ENCODE measurements at regions of chr4 and their contacts with region 1.

Region 1: GRCh38 chr4:110049951-110050925 is 137.6 kb downstream of the EGF start:
- DNase-seq: peak; percentile 38
- H3K4me3 ChIP-seq: no peak overlapping the region
- H3K27ac ChIP-seq: no peak overlapping the region
- H3K4me1 ChIP-seq: peaks cover 0 to 8% of the 10 kb centered on the region in 2 experiments; a peak in 1 of 4 replicates
- H3K27me3 ChIP-seq: no peaks in the 10 kb centered on the region
- CTCF ChIP-seq: peak; percentile 90
- EP300 ChIP-seq: no peak
- RAD21 ChIP-seq: peak; percentile 84

Region 2: GRCh38 chr4:110005461-110006056 is 44.7 kb before region 1 on chr4:
- CTCF ChIA-PET with region 1: interaction called, 13 read pairs
- POLR2A ChIA-PET with region 1: no interaction called
- DNase-seq: peak; percentile 52
- H3K4me3 ChIP-seq: no peak overlapping the region
- H3K27ac ChIP-seq: no peak overlapping the region
- H3K4me1 ChIP-seq: no peaks in the 10 kb centered on the region
- H3K27me3 ChIP-seq: no peaks in the 10 kb centered on the region
- CTCF ChIP-seq: peak; percentile 90
- EP300 ChIP-seq: no peak
- RAD21 ChIP-seq: peak; percentile 96

Region 3: DNA sequence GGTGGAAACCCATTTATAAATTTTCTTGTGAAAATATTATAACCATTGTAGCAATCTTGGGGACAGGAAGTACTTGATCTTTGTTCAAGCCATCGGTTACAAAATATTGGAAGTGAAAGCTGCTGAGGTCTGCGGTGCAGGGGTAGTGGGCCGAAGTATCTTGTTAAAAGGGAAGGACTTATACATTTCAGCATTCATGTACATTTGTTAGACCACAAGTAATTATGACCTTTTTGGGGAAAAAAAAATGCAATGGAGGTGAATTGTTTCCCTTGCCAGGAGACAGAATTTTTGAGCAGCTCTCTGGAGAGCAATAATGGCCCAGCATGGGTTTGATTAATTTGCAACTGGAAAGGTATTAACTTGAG is 16.2 kb before region 1 on chr4:
- CTCF ChIA-PET with region 1: interaction called, 11 read pairs
- POLR2A ChIA-PET with region 1: no interaction called
- DNase-seq: no peak
- H3K4me3 ChIP-seq: no peak overlapping the region
- H3K27ac ChIP-seq: no peak overlapping the region
- H3K4me1 ChIP-seq: no peaks in the 10 kb centered on the region; a peak in 1 of 4 replicates
- H3K27me3 ChIP-seq: no peaks in the 10 kb centered on the region
- CTCF ChIP-seq: no peak
- EP300 ChIP-seq: no peak
- RAD21 ChIP-seq: no peak

Region 4: DNA sequence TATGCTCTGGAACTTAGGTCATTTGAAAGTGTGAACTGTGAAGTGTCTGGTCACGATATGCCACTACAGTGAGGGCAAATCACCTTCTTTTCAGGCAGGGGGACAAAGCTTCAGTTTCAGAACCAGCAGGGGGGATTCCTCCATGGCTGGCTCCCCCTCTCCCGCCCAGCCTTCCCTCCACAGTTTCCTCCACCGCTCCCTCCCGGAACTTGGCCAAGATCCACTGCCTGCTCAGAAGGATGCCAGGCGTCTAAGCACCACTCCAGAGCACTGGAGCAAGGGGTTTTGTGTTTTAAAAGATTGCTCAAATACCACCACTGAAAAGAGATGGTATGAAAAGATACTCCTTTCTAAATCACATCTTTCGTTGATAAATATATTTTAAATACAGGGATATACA is 21.2 kb after region 1 on chr4:
- CTCF ChIA-PET with region 1: interaction called, 17 read pairs
- POLR2A ChIA-PET with region 1: interaction called, 3 read pairs
- DNase-seq: no peak
- H3K4me3 ChIP-seq: no peak overlapping the region
- H3K27ac ChIP-seq: no peak overlapping the region
- H3K4me1 ChIP-seq: peaks cover 0 to 14% of the 10 kb centered on the region in 2 experiments; a peak in 2 of 4 replicates
- H3K27me3 ChIP-seq: no peaks in the 10 kb centered on the region
- CTCF ChIP-seq: no peak
- EP300 ChIP-seq: no peak
- RAD21 ChIP-seq: no peak

Region 5: GRCh38 chr4:110268352-110268751 is 218.1 kb after region 1 on chr4:
- CTCF ChIA-PET with region 1: no interaction called
- POLR2A ChIA-PET with region 1: no interaction called
- DNase-seq: no peak
- H3K4me3 ChIP-seq: no peak overlapping the region
- H3K27ac ChIP-seq: no peak overlapping the region
- H3K4me1 ChIP-seq: no peaks in the 10 kb centered on the region
- H3K27me3 ChIP-seq: no peaks in the 10 kb centered on the region
- CTCF ChIP-seq: no peak
- EP300 ChIP-seq: no peak
- RAD21 ChIP-seq: no peak

Region 6: DNA sequence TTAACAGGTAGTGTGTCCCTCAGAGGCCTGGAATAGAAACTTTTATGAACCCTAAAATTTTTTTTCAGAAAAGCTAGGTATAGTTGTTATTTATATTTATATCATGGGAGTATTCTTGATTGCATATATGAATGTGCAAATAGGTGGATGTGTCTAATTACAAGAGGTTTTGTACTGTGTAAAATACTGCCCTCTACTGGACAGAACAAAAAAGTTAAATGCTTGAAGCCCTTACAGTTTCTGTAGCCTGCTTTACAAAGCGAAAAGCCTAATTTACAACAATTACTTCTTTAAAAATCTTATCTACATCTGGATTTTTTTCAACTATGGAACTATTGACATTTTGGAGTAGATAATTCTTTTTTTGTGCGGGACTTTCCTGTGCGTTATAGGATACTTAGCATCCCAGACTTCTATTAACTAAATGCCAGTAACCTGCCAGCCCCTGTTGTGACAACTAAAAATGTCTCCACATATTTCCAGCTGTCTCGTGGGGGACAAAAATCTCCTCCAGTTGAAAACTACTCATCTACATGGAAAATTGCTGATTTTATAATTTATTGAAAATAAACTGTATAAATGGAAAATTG is 460.8 kb after region 1 on chr4:
- CTCF ChIA-PET with region 1: interaction called, 28 read pairs
- POLR2A ChIA-PET with region 1: no interaction called
- DNase-seq: peak; percentile 40
- H3K4me3 ChIP-seq: no peak overlapping the region; a peak in 1 of 4 replicates
- H3K27ac ChIP-seq: no peak overlapping the region
- H3K4me1 ChIP-seq: no peaks in the 10 kb centered on the region; a peak in 1 of 4 replicates
- H3K27me3 ChIP-seq: no peaks in the 10 kb centered on the region
- CTCF ChIP-seq: peak; percentile 84
- EP300 ChIP-seq: no peak
- RAD21 ChIP-seq: peak; percentile 78

Region 7: DNA sequence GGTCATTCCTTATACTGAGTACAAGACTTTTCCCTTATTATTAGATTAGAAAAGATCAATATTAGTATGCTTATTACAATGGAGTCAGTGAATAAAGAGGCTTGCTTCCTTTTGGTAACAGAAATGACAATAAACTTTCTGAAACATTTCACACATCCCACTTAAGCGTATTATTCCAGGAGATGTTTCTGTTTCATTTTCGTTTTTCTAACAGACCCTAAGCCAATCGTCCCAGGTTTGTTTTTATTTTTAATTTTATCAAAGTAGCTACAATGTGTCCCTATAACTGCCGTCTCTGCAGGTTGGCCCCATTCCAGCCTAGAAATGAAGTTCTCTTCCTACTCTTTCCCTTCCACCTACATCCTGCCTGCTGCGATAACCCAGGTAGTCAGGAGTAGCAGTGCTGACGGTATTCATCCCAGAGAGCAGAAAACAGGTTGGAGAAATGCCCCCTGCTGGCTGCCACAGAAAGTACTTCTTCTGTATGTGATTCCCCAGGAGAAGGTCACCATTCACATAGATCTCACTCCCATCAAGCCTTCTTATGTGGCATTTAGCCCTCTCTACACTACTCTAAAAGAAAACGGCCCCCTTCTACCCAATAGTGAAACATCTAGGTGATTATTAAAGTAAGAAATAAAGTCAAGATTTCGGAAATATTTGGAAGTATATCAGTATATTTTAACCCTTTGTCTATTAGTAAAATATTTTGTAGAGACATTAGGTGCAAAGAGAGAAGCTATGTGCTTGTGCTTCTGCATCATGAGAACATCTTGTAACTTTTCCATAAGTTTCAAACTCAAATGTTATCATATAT is 466.1 kb after region 1 on chr4:
- CTCF ChIA-PET with region 1: interaction called, 28 read pairs
- POLR2A ChIA-PET with region 1: no interaction called
- DNase-seq: peak; percentile 37
- H3K4me3 ChIP-seq: peak overlapping the region; percentile 54 to 55
- H3K27ac ChIP-seq: no peak overlapping the region
- H3K4me1 ChIP-seq: peaks cover 0 to 2% of the 10 kb centered on the region in 2 experiments; a peak in 2 of 4 replicates
- H3K27me3 ChIP-seq: peaks cover 4% of the 10 kb centered on the region; the same call in 1 of the 2 replicates
- CTCF ChIP-seq: peak; percentile 78
- EP300 ChIP-seq: no peak
- RAD21 ChIP-seq: peak; percentile 63

Measured in SK-N-SH (cell line).